A673 (cell line): ENCODE measurements at regions of chr1 and their contacts with region 1.

Region 1: GRCh38 chr1:220113136-220113695 is 19.3 kb downstream of the IARS2 start:
- DNase-seq: peak; percentile 73
- H3K4me3 ChIP-seq: no peak overlapping the region
- H3K27ac ChIP-seq: no peak overlapping the region
- H3K4me1 ChIP-seq: no peaks in the 10 kb centered on the region
- H3K27me3 ChIP-seq: no peaks in the 10 kb centered on the region
- CTCF ChIP-seq: peak; percentile 86

Region 2: GRCh38 chr1:219990782-219991510 is 122.3 kb before region 1 on chr1:
- CTCF ChIA-PET with region 1: interaction called, 3 read pairs
- POLR2A ChIA-PET with region 1: interaction called, 12 read pairs
- intact Hi-C with region 1: no loop called
- DNase-seq: peak; percentile 56
- H3K4me3 ChIP-seq: no peak overlapping the region
- H3K27ac ChIP-seq: no peak overlapping the region
- H3K4me1 ChIP-seq: no peaks in the 10 kb centered on the region
- H3K27me3 ChIP-seq: no peaks in the 10 kb centered on the region
- CTCF ChIP-seq: peak; percentile 72

Region 3: GRCh38 chr1:220089650-220090556 is 23.3 kb before region 1 on chr1 and contains the start of gene BPNT1:
- CTCF ChIA-PET with region 1: interaction called, 10 read pairs
- POLR2A ChIA-PET with region 1: interaction called, 8 read pairs
- intact Hi-C with region 1: no loop called
- DNase-seq: peak; percentile 94
- H3K4me3 ChIP-seq: peak within 1 kb of the TSS; percentile 59
- H3K27ac ChIP-seq: peak within 1 kb of the TSS; percentile 3
- H3K4me1 ChIP-seq: no peaks in the 10 kb centered on the region
- H3K27me3 ChIP-seq: no peaks in the 10 kb centered on the region
- CTCF ChIP-seq: no peak
- total RNA-seq, gene BPNT1: 23.5 and 25.5 TPM in 2 replicates

Region 4: GRCh38 chr1:220198186-220199005 is 85.2 kb after region 1 on chr1:
- CTCF ChIA-PET with region 1: no interaction called
- POLR2A ChIA-PET with region 1: no interaction called
- intact Hi-C with region 1: no loop called
- DNase-seq: no peak
- H3K4me3 ChIP-seq: no peak overlapping the region
- H3K27ac ChIP-seq: no peak overlapping the region
- H3K4me1 ChIP-seq: no peaks in the 10 kb centered on the region
- H3K27me3 ChIP-seq: no peaks in the 10 kb centered on the region
- CTCF ChIP-seq: no peak